Gastrocnemius medialis (tissue), 4 donors: ENCODE measurements at regions of chr6 and their contacts with region 1.

Region 1: GRCh38 chr6:144190593-144190992 is 40.3 kb downstream of the STX11 start:
- DNase-seq: peak; percentile 14 to 54
- ATAC-seq: peak; percentile 84 to 91
- H3K4me3 ChIP-seq: no peak overlapping the region
- H3K27ac ChIP-seq: peak overlapping the region in 3 of 4 donors; percentile 19 to 54 (median 35)
- H3K4me1 ChIP-seq: no peaks in the 10 kb centered on the region
- H3K27me3 ChIP-seq: no peaks in the 10 kb centered on the region
- CTCF ChIP-seq: no peak
- POLR2A ChIP-seq: no peak

Region 2: DNA sequence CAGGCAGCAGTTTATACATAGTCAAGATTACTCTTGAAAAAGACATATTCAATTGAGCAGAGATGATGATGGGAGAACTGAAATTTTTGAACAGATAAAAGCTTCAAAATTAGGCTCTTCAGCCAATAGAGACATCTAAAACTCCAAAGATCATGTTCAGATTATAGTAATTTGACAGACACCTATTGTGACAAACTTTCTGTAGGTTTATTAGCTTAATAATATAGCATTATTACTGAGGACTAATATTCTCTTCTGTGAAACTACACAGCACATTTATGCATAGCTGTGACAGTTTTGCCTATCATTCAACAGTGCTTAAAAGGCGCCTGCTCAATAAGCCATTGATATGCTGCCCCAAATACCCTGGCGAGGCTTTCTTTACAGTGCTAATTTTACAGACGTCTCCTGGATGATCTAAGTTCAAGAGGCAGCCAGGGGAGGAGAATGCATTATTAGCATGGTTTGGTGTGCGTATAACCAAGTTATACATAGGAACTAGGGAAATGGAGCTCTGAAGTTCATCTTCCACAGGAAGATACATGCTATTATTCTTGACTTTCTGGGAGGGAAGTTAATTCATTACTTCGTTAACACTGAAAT is 204.0 kb before region 1 on chr6:
- in situ Hi-C with region 1: no loop called
- intact Hi-C with region 1: no loop called
- DNase-seq: no peak
- ATAC-seq: no peak
- H3K4me3 ChIP-seq: no peak overlapping the region
- H3K27ac ChIP-seq: no peak overlapping the region
- H3K4me1 ChIP-seq: no peaks in the 10 kb centered on the region
- H3K27me3 ChIP-seq: no peaks in the 10 kb centered on the region
- CTCF ChIP-seq: no peak
- POLR2A ChIP-seq: no peak

Region 3: GRCh38 chr6:144149891-144150709 is 40.5 kb before region 1 on chr6 and contains the start of gene STX11:
- in situ Hi-C with region 1: no loop called
- intact Hi-C with region 1: loop called (anchors 2 kb)
- DNase-seq: peak; percentile 19 to 27
- ATAC-seq: peak; percentile 45 to 60
- H3K4me3 ChIP-seq: peak within 1 kb of the TSS; percentile 62 to 81 (median 70)
- H3K27ac ChIP-seq: peak within 1 kb of the TSS; percentile 10 to 72 (median 64)
- H3K4me1 ChIP-seq: peaks cover 2 to 4% of the 10 kb centered on the region in 2 donors
- H3K27me3 ChIP-seq: peaks cover 8 to 21% (median 8%) of the 10 kb centered on the region in 3 donors
- CTCF ChIP-seq: no peak
- POLR2A ChIP-seq: peak; percentile 62 to 75
- total RNA-seq, gene STX11: 2.0 to 5.2 (median 4.3) TPM